Endothelial cell of umbilical vein (primary cell): ENCODE measurements at regions of chr13 and their contacts with region 1.

Region 1: DNA sequence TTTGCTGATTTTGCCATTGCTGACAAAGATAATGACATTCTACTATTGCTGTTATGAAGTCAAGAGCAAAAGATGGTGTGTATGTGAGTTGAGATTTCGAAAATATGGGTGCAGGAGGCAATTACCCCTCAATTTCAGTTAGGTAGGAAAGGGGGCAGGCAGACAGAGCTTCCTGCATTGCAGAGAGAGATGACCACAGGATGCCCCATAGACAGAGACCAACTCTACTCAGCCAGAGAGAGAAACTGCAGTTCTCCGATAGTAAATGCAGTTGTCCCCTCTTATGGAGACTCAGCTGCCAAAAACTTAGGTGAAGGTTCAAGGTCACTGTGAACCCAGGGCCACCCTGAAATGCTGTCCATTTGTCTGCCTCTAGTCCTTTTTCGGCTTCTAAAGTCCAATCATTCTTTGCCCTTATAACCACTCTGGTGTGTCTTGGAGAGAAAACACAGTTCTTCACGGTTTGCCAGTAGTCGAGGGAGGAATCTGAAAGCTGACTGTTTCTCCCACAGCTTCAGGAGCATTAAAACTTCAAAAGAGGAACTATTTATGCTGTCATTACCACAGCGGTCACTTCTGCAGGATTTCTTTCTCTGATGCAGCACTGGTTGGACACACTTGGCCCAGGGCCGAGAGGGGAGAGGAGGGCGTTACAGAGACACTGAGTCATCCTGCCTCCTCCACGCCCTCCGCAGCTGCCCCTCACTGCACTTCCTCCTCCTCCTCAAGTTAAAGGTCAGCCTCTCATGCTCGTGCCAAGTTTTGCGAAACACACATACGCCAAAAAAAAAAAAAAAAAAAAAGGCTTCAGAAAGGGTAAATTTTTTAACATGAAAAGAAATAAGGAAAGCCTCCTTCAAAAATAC is 264.3 kb downstream of the FOXO1 start:
- DNase-seq: peak; percentile 93
- H3K4me3 ChIP-seq: no peak overlapping the region
- H3K27ac ChIP-seq: peak overlapping the region; percentile 61
- H3K4me1 ChIP-seq: peaks cover 31% of the 10 kb centered on the region
- H3K27me3 ChIP-seq: no peaks in the 10 kb centered on the region
- CTCF ChIP-seq: no peak
- POLR2A ChIP-seq: no peak

Region 2: GRCh38 chr13:39876258-39876657 is 525.9 kb before region 1 on chr13:
- CTCF ChIA-PET with region 1: no interaction called
- POLR2A ChIA-PET with region 1: no interaction called
- dilution Hi-C with region 1: no loop called
- intact Hi-C with region 1: loop called (anchors 10 kb)
- DNase-seq: peak; percentile 90
- H3K4me3 ChIP-seq: no peak overlapping the region
- H3K27ac ChIP-seq: peak overlapping the region; percentile 98
- H3K4me1 ChIP-seq: peaks cover 67% of the 10 kb centered on the region
- H3K27me3 ChIP-seq: no peaks in the 10 kb centered on the region
- CTCF ChIP-seq: no peak
- POLR2A ChIP-seq: peak; percentile 25

Region 3: DNA sequence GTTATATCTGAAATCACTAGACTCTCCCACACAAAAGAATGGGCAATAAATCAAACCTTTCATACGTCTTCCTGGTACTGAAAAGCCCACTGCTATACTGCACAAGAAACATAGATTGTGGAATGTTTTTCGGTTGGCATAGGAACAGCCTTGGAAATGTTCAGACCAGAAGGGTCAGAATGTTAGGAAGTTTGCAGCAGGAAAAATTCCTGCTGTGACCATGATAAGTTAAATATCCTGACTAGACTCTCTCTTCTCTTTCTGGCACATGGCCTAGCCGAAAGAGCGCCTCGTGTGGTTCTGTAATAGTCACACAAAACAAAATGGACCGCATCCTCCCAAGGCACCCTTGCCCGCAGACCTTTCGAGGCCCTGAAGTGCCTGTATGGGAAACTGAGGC is 319.5 kb before region 1 on chr13:
- CTCF ChIA-PET with region 1: no interaction called
- POLR2A ChIA-PET with region 1: no interaction called
- dilution Hi-C with region 1: no loop called
- intact Hi-C with region 1: loop called (anchors 2 kb)
- DNase-seq: peak; percentile 99
- H3K4me3 ChIP-seq: no peak overlapping the region
- H3K27ac ChIP-seq: peak overlapping the region; percentile 71
- H3K4me1 ChIP-seq: peaks cover 11% of the 10 kb centered on the region
- H3K27me3 ChIP-seq: no peaks in the 10 kb centered on the region
- CTCF ChIP-seq: peak; percentile 30 to 62
- POLR2A ChIP-seq: no peak

Region 4: DNA sequence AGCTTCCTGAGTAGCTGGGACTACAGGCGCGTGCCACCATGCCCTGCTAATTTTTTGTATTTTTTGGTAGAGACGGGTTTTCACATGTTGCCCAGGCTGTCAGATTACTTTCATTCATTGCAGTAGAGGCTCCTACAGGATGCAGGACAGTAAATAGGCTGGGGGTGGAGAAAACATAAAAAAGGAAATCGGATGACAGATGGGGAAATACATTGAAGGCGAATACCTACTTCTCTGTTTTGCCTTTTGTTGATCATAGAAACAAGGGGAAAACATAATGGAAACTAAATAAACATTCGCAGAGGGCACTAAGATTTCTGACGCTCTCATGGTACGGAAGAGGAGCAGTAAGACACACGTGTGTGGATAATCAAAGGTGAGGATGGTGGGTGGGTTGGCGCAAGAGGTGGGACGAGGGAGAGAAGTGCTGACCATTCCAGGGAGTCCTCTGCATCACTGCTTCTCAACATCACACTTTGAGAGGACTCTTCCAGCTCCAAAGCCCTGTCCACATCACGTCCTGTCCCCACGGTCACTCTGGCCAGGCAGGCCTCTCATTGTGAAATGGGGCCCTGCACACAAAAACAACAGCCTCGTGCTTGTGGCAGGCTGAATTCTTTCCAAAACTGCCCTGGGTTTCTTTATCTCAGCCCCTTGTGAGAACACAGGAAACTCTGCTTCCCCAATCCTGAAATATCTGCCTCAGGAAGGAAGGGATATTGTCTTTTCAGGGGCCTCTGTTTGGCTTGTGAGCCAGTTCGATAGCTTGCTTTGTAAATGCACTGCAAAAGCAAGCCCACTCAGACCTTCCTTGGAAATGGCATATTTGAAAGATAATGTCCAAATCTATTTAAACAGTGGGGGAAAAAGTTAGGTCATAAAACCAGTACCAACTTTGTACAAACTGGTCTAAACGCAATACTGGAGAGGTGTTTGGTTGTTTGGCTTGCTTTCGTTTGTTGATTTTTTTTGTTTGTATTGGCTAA is 75.8 kb after region 1 on chr13:
- CTCF ChIA-PET with region 1: no interaction called
- POLR2A ChIA-PET with region 1: no interaction called
- dilution Hi-C with region 1: no loop called
- intact Hi-C with region 1: loop called (anchors 1 kb)
- DNase-seq: peak; percentile 94
- H3K4me3 ChIP-seq: peak overlapping the region in 1 of 3 experiments; percentile 10
- H3K27ac ChIP-seq: peak overlapping the region; percentile 92
- H3K4me1 ChIP-seq: peaks cover 32% of the 10 kb centered on the region
- H3K27me3 ChIP-seq: no peaks in the 10 kb centered on the region
- CTCF ChIP-seq: no peak
- POLR2A ChIP-seq: peak; percentile 36

Region 5: GRCh38 chr13:40540328-40541044 is 138.3 kb after region 1 on chr13:
- CTCF ChIA-PET with region 1: no interaction called
- POLR2A ChIA-PET with region 1: no interaction called
- dilution Hi-C with region 1: no loop called
- intact Hi-C with region 1: loop called (anchors 2 kb)
- DNase-seq: peak; percentile 96
- H3K4me3 ChIP-seq: no peak overlapping the region
- H3K27ac ChIP-seq: peak overlapping the region; percentile 80
- H3K4me1 ChIP-seq: peaks cover 18% of the 10 kb centered on the region
- H3K27me3 ChIP-seq: no peaks in the 10 kb centered on the region
- CTCF ChIP-seq: no peak
- POLR2A ChIP-seq: no peak